ENCODE measurements at regions of chr12 and their contacts with region 1.

Region 1: DNA sequence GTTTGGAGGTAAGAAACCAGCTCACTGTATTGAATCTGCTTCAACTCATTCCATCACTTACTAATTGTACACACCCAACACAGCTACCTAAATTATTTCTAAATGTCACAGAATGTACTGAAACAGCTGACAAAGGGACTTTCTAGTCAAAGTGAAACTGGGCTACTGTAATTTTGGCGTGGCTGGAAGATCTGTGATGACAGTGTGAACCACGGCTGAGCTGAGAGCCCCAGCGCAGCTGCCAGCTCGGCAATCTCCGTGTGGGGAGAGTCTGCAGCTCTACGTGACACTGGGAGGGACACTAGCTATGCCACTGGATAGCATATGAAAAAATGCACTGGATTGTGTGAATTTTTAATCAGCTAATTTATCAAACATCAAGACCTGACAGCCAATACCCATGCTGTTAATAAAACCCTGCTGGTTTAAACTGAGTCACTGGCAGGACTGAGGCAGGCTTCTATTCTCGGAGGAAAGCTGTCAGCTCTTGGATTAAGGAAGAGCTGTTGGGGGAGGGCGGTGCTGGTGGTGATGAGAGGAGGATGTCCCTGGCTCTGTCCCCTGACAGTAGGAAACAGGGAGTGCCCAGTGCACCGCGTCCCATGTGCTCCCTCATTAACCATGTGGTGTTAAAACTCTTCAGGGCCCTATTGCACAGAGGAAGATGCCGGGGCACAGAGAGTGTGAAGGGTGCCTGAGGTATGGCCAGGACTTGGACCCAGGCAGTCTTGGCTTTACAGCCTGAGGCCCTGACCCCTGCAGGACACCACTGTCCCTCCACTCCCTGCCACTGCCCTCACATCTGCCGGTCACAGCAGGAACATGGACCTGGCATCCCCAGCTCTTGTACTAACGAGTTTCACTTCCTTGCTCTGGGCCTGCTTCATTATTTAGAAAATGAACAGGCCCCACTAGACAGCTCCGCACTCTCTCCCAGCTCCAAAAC is 13.3 kb downstream of the SLC15A4 start:
- DNase-seq: peak in 1 of 9 donors; percentile 51
- ATAC-seq: peak; percentile 75
- H3K4me3 ChIP-seq: no peak overlapping the region
- H3K4me3 Mint-ChIP-seq: peak overlapping the region in 5 of 10 donors; percentile 3 to 76 (median 28)
- H3K27ac ChIP-seq: no peak overlapping the region
- H3K27ac Mint-ChIP-seq: peak overlapping the region in 6 of 9 donors; percentile 12 to 88 (median 43)
- H3K4me1 ChIP-seq: peaks cover 0 to 24% of the 10 kb centered on the region in 2 donors
- H3K4me1 Mint-ChIP-seq: peaks cover 17 to 52% (median 29%) of the 10 kb centered on the region in 7 donors
- H3K27me3 ChIP-seq: no peaks in the 10 kb centered on the region
- H3K27me3 Mint-ChIP-seq: no peaks in the 10 kb centered on the region

Region 2: DNA sequence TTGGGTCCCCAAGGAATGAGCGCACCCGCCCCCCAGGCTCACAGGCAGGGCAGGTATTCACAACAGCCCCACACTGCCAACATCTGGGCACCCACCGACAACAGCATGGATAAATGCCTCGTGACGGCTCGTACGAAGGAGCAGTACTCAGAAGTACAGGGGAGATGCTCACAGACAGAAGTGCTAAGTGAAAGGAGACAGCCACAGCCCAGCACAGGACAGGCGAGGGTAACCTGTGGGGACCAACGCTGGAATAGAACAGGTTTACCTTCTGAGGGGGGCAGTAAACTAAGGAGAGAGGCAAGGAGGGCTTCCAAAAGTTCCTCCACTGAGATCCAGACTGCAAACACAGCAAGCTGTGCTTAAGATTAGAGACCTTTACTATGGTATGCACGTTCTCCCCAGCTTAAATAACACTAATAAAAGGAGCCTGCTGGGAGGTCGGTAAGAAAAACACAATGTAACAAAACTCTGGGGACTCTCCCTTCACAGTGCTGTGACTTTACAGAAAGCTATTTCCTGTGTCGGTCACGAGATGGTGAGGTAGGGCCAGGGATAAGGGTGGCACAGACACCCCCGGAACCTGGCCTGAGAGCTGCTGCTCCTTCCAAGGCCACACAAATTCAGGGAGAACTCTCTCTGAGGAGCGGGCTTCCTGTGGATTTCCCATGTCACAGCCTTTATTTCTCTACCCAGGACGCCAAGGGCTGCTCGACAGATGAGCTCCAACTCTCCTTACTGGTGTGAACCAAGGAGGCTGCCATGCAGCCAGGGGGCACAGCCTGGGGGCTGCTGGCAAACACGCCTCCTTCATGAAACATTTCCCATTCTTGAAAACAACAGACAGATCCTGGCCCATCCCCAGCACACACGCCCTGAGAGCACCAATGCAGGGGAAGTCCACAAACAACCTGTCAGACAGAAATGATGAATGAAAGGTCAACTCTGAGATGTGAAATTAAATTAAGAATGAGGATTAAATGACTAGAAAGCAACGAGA is 13.0 kb before region 1 on chr12:
- CTCF ChIA-PET with region 1: no interaction called
- POLR2A ChIA-PET with region 1: no interaction called
- intact Hi-C with region 1: no loop called
- DNase-seq: no peak
- ATAC-seq: peak; percentile 70
- H3K4me3 ChIP-seq: no peak overlapping the region
- H3K4me3 Mint-ChIP-seq: peak overlapping the region in 2 of 10 donors; percentile 29 to 36
- H3K27ac ChIP-seq: peak overlapping the region; percentile 11
- H3K27ac Mint-ChIP-seq: peak overlapping the region in 4 of 9 donors; percentile 28 to 77 (median 52)
- H3K4me1 ChIP-seq: peaks cover 0 to 61% of the 10 kb centered on the region in 2 donors
- H3K4me1 Mint-ChIP-seq: peaks cover 12 to 51% (median 21%) of the 10 kb centered on the region in 7 donors
- H3K27me3 ChIP-seq: no peaks in the 10 kb centered on the region
- H3K27me3 Mint-ChIP-seq: no peaks in the 10 kb centered on the region

Region 3: GRCh38 chr12:128844031-128844635 is 33.7 kb after region 1 on chr12:
- CTCF ChIA-PET with region 1: no interaction called
- POLR2A ChIA-PET with region 1: no interaction called
- intact Hi-C with region 1: loop called in 1 of 2 experiments (anchors 1 kb)
- DNase-seq: no peak
- ATAC-seq: peak; percentile 87
- H3K4me3 ChIP-seq: no peak overlapping the region
- H3K4me3 Mint-ChIP-seq: no peak overlapping the region
- H3K27ac ChIP-seq: no peak overlapping the region
- H3K27ac Mint-ChIP-seq: peak overlapping the region in 1 of 9 donors; percentile 23
- H3K4me1 ChIP-seq: peaks cover 0 to 4% of the 10 kb centered on the region in 2 donors
- H3K4me1 Mint-ChIP-seq: peaks cover 0 to 22% (median 4%) of the 10 kb centered on the region in 7 donors
- H3K27me3 ChIP-seq: no peaks in the 10 kb centered on the region
- H3K27me3 Mint-ChIP-seq: peaks cover 0 to 8% (median 4%) of the 10 kb centered on the region in 5 donors

Measured in naive thymus-derived CD4-positive, alpha-beta T cell (primary cell).